ENCODE measurements at regions of chrX and their contacts with region 1.

Region 1: GRCh38 chrX:24241822-24242648 is 71.8 kb downstream of the SUPT20HL2 start:
- DNase-seq: peak; percentile 41
- H3K4me3 ChIP-seq: no peak overlapping the region
- H3K27ac ChIP-seq: peak overlapping the region; percentile 84
- H3K4me1 ChIP-seq: peaks cover 34% of the 10 kb centered on the region
- H3K27me3 ChIP-seq: no peaks in the 10 kb centered on the region

Region 2: GRCh38 chrX:24081661-24082264 is 160.3 kb before region 1 on chrX:
- in situ Hi-C with region 1: loop called (anchors 25 kb)
- DNase-seq: peak; percentile 65
- H3K4me3 ChIP-seq: peak overlapping the region; percentile 42
- H3K27ac ChIP-seq: peak overlapping the region; percentile 27; the same call in 1 of the 2 replicates
- H3K4me1 ChIP-seq: peaks cover 2% of the 10 kb centered on the region; the same call in 1 of the 2 replicates
- H3K27me3 ChIP-seq: no peaks in the 10 kb centered on the region

Region 3: GRCh38 chrX:24902806-24903205 is 660.8 kb after region 1 on chrX:
- in situ Hi-C with region 1: no loop called
- DNase-seq: peak; percentile 60
- H3K4me3 ChIP-seq: no peak overlapping the region
- H3K27ac ChIP-seq: no peak overlapping the region
- H3K4me1 ChIP-seq: no peaks in the 10 kb centered on the region
- H3K27me3 ChIP-seq: no peaks in the 10 kb centered on the region